T-cell (primary cell): ENCODE measurements at regions of chr6 and their contacts with region 1.

Region 1: DNA sequence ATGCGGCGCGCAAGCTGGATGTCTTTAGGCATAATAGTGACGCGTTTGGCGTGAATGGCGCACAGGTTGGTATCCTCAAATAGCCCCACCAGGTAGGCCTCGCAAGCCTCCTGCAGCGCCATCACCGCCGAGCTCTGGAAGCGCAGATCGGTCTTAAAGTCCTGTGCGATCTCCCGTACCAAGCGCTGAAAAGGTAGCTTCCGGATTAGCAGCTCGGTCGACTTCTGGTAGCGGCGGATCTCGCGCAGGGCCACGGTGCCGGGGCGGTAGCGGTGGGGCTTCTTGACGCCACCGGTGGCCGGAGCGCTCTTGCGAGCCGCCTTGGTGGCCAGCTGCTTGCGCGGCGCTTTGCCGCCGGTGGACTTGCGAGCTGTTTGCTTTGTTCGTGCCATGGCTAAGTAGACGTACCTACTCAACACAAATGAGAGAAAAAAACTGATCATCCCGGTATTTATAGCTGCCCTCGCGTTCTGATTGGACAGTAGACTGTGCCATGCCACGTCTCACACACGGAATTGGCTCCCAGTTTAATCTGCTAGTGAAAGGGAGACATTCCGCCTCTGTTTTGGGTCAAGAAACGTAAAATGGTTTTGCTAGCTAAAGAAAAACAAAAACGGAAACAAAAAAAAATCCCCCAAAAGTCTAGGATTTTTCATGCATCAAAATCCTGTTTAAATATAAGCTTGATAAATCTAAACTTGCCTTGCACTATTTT is 40.1 kb downstream of the OR2B2 start:
- DNase-seq: peak; percentile 70 to 96 (median 84)
- ATAC-seq: peak; percentile 79 to 82 (median 80)
- H3K4me3 ChIP-seq: peak overlapping the region; percentile 65 to 80
- H3K4me3 Mint-ChIP-seq: peak overlapping the region; percentile 83 to 87 (median 84)
- H3K27ac ChIP-seq: peak overlapping the region; percentile 92
- H3K27ac Mint-ChIP-seq: peak overlapping the region; percentile 93 to 96
- H3K4me1 ChIP-seq: peaks cover 16 to 34% of the 10 kb centered on the region in 2 experiments
- H3K4me1 Mint-ChIP-seq: peaks cover 38 to 47% (median 42%) of the 10 kb centered on the region in 3 donors
- H3K27me3 ChIP-seq: no peaks in the 10 kb centered on the region
- H3K27me3 Mint-ChIP-seq: no peaks in the 10 kb centered on the region

Region 2: DNA sequence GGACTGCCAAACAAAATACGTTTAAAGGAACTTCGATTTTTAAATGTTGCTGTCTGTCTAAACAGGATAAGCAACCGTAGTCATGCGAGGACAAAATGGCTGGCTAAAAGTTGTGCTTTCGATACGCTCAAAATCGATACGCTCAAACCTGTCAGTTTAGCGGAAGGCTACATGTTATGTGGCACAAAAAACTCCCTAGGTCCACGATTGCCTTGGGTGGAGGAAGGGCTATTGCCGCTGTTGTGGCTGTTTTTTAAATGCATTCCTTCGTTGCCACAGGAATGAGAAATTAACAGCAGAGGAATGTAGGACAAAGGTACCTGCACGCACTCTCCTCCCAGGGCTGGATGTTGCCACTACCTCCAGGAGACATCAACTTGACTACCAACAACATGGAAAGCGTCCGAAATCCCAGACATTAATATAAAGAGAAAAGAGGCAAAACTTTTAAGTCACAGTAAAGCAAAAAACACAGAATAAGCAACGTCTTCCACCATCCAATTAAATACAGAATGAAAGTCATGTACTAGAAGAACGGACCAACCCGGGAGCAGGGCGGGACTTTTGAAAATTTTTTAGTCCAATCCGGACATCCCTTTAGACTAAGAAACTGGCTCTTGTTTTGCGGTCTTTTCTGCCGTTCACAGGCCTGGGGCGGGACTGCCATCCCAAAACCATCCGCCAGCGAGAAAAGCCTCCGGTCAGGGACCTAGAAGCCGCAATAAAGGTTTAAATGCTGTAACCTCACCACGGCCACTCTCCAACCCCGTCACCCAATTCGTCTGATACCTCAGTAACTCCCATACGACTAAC is 1817.0 kb before region 1 on chr6:
- CTCF ChIA-PET with region 1: no interaction called
- POLR2A ChIA-PET with region 1: interaction called in 1 of 2 experiments, 11 read pairs
- DNase-seq: peak; percentile 63 to 95 (median 86)
- ATAC-seq: peak; percentile 60 to 73 (median 67)
- H3K4me3 ChIP-seq: peak overlapping the region; percentile 87 to 98
- H3K4me3 Mint-ChIP-seq: peak overlapping the region; percentile 95 to 97 (median 96)
- H3K27ac ChIP-seq: peak overlapping the region; percentile 96
- H3K27ac Mint-ChIP-seq: peak overlapping the region; percentile 97 to 100
- H3K4me1 ChIP-seq: peaks cover 16 to 26% of the 10 kb centered on the region in 2 experiments
- H3K4me1 Mint-ChIP-seq: peaks cover 21 to 26% (median 23%) of the 10 kb centered on the region in 3 donors
- H3K27me3 ChIP-seq: no peaks in the 10 kb centered on the region
- H3K27me3 Mint-ChIP-seq: no peaks in the 10 kb centered on the region

Region 3: GRCh38 chr6:27132532-27133280 is 739.4 kb before region 1 on chr6:
- CTCF ChIA-PET with region 1: interaction called in 1 of 2 experiments, 4 read pairs
- POLR2A ChIA-PET with region 1: interaction called, 3 to 13 read pairs
- DNase-seq: peak; percentile 76 to 98 (median 87)
- ATAC-seq: peak; percentile 80 to 87 (median 86)
- H3K4me3 ChIP-seq: peak overlapping the region; percentile 49 to 77
- H3K4me3 Mint-ChIP-seq: no peak overlapping the region
- H3K27ac ChIP-seq: peak overlapping the region; percentile 85
- H3K27ac Mint-ChIP-seq: no peak overlapping the region
- H3K4me1 ChIP-seq: peaks cover 17 to 34% of the 10 kb centered on the region in 2 experiments
- H3K4me1 Mint-ChIP-seq: peaks cover 22 to 30% (median 22%) of the 10 kb centered on the region in 3 donors
- H3K27me3 ChIP-seq: no peaks in the 10 kb centered on the region
- H3K27me3 Mint-ChIP-seq: no peaks in the 10 kb centered on the region

Region 4: DNA sequence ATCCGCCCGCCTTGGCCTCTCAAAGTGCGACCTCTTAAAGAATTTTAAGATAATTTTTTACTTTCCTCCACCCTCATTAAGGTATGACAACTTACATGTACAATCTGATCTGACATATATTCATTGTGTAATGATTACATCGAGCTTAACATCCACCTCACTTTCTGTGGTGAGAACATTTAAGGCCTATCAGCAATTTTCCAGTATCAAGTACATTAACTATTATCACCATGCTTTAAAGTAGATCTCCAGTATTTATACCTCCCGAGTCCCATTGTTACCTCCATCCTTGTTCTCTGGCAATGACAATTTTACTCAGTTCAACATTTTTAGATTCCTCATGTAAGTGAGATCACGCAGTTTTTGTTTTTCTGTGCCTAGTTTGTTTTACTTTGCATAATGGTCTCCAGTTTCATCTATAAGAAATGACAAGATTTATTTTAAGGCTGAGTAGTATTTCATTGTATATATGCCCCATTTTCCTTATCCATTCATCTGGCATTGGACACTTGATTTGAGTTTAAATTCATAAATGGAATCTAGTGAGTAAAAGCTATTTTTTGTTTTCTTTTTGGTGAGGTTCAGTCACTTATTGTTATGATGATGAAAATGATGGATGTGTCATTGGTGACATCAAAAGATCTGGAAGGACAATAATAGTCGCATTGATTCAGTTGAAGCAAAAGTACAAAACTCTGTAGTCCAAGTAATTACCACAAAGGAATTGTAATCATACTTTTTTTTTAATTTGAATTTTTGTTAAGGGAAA is 46.9 kb before region 1 on chr6:
- CTCF ChIA-PET with region 1: interaction called in 1 of 2 experiments, 23 read pairs
- POLR2A ChIA-PET with region 1: interaction called, 9 to 32 read pairs
- DNase-seq: peak in 1 of 35 experiments; percentile 39
- ATAC-seq: no peak
- H3K4me3 ChIP-seq: peak overlapping the region; percentile 61 to 92
- H3K4me3 Mint-ChIP-seq: peak overlapping the region; percentile 80 to 90 (median 87)
- H3K27ac ChIP-seq: peak overlapping the region; percentile 89
- H3K27ac Mint-ChIP-seq: peak overlapping the region; percentile 89 to 96
- H3K4me1 ChIP-seq: peaks cover 6 to 12% of the 10 kb centered on the region in 2 experiments
- H3K4me1 Mint-ChIP-seq: peaks cover 36 to 39% (median 38%) of the 10 kb centered on the region in 3 donors
- H3K27me3 ChIP-seq: no peaks in the 10 kb centered on the region
- H3K27me3 Mint-ChIP-seq: no peaks in the 10 kb centered on the region

Region 5: DNA sequence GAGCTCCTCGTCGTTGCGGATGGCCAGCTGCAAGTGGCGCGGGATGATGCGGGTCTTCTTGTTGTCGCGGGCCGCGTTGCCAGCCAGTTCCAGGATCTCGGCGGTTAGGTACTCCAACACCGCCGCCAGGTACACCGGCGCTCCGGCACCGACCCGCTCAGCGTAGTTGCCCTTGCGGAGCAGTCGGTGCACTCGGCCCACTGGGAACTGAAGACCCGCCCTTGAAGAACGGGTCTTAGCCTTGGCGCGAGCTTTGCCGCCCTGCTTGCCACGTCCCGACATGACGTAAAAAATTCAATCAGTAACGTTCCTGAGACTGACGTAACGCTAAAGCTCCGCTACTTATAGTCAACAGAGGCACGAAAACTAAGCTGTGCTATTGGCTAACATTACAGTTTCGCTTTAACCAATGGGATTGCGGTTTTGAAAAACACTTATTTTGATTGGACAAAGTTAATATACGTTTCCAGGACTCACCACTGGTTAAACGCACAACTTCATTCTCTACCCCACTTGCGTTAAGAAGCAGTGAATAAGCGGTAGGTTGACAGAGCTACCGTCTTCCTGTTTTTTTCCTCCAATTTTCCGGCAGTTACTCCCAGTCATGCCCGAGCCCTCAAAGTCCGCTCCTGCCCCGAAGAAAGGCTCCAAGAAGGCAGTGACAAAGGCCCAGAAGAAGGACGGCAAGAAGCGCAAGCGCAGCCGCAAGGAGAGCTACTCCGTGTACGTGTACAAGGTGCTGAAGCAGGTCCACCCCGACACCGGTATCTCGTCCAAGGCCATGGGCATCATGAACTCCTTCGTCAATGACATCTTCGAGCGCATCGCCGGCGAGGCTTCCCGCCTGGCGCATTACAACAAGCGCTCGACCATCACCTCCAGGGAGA is 33.8 kb before region 1 on chr6:
- CTCF ChIA-PET with region 1: interaction called, 6 to 112 read pairs
- POLR2A ChIA-PET with region 1: interaction called, 59 to 396 read pairs
- DNase-seq: peak; percentile 62 to 97 (median 79)
- ATAC-seq: peak; percentile 80 to 83 (median 82)
- H3K4me3 ChIP-seq: peak overlapping the region; percentile 86 to 87
- H3K4me3 Mint-ChIP-seq: no peak overlapping the region
- H3K27ac ChIP-seq: peak overlapping the region; percentile 99
- H3K27ac Mint-ChIP-seq: no peak overlapping the region
- H3K4me1 ChIP-seq: peaks cover 14 to 28% of the 10 kb centered on the region in 2 experiments
- H3K4me1 Mint-ChIP-seq: peaks cover 9 to 20% (median 9%) of the 10 kb centered on the region in 3 donors
- H3K27me3 ChIP-seq: peaks cover 0 to 8% of the 10 kb centered on the region in 2 experiments
- H3K27me3 Mint-ChIP-seq: peaks cover 4 to 7% of the 10 kb centered on the region in 2 donors